ENCODE measurements at regions of chr6 and their contacts with region 1.

Region 1: GRCh38 chr6:83160167-83160566 is 32.9 kb downstream of the PGM3 start:
- DNase-seq: no peak
- ATAC-seq: no peak
- H3K4me3 ChIP-seq: no peak overlapping the region
- H3K27ac ChIP-seq: no peak overlapping the region
- H3K4me1 ChIP-seq: no peaks in the 10 kb centered on the region
- H3K27me3 ChIP-seq: no peaks in the 10 kb centered on the region
- CTCF ChIP-seq: no peak
- POLR2A ChIP-seq: no peak
- RAD21 ChIP-seq: no peak

Region 2: DNA sequence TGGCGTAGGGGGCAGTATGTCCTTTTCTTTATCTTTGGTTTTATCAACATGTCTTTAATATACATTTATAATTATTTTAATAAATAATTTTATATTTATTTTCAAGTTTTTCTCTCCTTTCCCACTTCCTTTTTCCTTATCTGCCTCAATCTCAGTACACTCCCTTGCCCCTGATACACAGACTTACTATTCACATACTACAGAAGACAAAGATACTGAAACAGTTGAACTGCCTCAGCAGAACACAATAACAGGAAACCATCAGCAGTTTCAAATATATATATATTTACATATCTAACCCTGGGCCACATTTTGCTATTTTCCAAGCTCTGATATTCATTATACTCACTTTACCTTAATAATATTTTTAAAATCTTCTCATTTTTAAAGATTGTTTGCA is 932.4 kb before region 1 on chr6:
- CTCF ChIA-PET with region 1: no interaction called
- POLR2A ChIA-PET with region 1: no interaction called
- dilution Hi-C with region 1: no loop called
- in situ Hi-C with region 1: no loop called
- intact Hi-C with region 1: loop called (anchors 5 kb)
- DNase-seq: no peak
- ATAC-seq: no peak
- H3K4me3 ChIP-seq: no peak overlapping the region
- H3K27ac ChIP-seq: no peak overlapping the region
- H3K4me1 ChIP-seq: no peaks in the 10 kb centered on the region
- H3K27me3 ChIP-seq: no peaks in the 10 kb centered on the region
- CTCF ChIP-seq: no peak
- POLR2A ChIP-seq: no peak
- RAD21 ChIP-seq: no peak

Region 3: DNA sequence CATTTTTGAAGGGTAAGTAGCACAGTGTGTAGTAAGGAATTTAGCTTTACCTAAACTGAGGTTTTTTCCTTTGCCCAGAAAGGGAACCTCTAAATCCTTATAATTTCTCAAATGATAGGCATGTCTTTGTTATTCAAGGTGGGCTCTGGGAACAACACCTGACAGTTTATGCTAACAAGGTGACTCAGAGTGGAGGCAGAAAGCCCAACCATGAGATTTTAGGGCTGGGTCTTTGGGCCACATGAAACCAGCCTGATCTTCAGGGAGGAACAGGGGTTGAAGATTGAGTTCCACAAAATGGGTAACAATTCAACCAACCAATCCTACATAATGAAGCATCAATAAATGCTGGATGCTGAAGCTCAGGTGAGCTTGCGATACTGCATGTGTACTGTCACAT is 398.8 kb after region 1 on chr6:
- CTCF ChIA-PET with region 1: no interaction called
- POLR2A ChIA-PET with region 1: no interaction called
- dilution Hi-C with region 1: no loop called
- in situ Hi-C with region 1: no loop called
- intact Hi-C with region 1: no loop called
- DNase-seq: no peak
- ATAC-seq: no peak
- H3K4me3 ChIP-seq: no peak overlapping the region
- H3K27ac ChIP-seq: no peak overlapping the region
- H3K4me1 ChIP-seq: no peaks in the 10 kb centered on the region
- H3K27me3 ChIP-seq: peaks cover 6% of the 10 kb centered on the region; the same call in 1 of the 2 replicates
- CTCF ChIP-seq: no peak
- POLR2A ChIP-seq: no peak
- RAD21 ChIP-seq: no peak

Region 4: GRCh38 chr6:84243240-84243639 is 1083.1 kb after region 1 on chr6:
- CTCF ChIA-PET with region 1: no interaction called
- POLR2A ChIA-PET with region 1: no interaction called
- dilution Hi-C with region 1: no loop called
- in situ Hi-C with region 1: no loop called
- intact Hi-C with region 1: no loop called
- DNase-seq: no peak
- ATAC-seq: no peak
- H3K4me3 ChIP-seq: no peak overlapping the region
- H3K27ac ChIP-seq: no peak overlapping the region
- H3K4me1 ChIP-seq: no peaks in the 10 kb centered on the region
- H3K27me3 ChIP-seq: no peaks in the 10 kb centered on the region
- CTCF ChIP-seq: no peak
- POLR2A ChIP-seq: no peak
- RAD21 ChIP-seq: no peak